ENCODE measurements at regions of chr6 and their contacts with region 1.

Region 1: DNA sequence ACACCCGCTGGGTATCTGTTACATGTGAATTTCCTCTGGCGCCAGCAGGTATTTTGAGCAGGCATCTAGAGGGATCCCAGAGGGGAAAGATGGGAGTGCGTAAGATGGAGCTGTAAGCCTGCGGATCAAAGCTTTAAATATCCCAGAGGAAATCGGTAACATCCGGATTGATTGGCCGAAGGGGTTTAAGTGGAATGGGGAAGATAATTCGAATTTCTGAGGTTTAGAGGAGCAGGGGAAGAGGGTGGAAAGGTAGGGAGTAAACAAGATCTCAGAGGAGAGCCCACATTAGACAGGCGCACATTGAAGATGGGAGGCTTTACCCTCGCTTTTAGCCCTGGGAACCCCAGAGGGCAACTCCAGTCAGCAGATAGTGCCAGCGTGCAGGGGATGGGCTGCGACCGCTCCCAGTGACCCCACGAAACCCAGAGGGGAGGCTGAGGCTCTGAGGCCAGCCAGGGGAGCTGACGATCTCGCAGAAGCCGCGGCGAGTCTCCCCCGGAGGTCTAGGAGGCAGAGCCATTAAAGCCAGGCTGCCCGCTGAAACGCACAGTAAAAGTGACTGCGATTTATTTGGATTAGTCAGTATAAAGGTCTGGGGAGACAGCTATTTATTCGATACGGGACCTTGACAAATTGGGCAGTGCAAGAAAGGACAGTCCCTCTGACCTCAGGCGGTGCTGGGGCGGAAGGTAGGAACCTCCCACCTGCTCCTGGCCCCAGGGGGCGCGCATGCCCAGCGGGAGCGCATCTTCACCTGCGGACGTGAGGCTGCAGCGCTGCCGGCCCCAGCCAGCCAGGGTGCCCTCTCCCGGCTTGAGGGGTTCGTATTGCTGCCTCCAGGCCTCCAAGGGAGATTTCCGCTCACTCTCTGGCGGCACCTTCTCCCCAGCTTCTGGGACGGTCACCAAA is 34.3 kb upstream of the TCF21 start:
- DNase-seq: no peak
- H3K4me3 Mint-ChIP-seq: no peak overlapping the region
- H3K27ac Mint-ChIP-seq: no peak overlapping the region
- H3K4me1 Mint-ChIP-seq: peaks cover 3% of the 10 kb centered on the region
- H3K27me3 Mint-ChIP-seq: peaks cover 57% of the 10 kb centered on the region

Region 2: GRCh38 chr6:133707456-133707855 is 147.2 kb before region 1 on chr6:
- CTCF ChIA-PET with region 1: no interaction called
- POLR2A ChIA-PET with region 1: no interaction called
- DNase-seq: peak; percentile 34
- H3K4me3 Mint-ChIP-seq: no peak overlapping the region
- H3K27ac Mint-ChIP-seq: no peak overlapping the region
- H3K4me1 Mint-ChIP-seq: peaks cover 6% of the 10 kb centered on the region
- H3K27me3 Mint-ChIP-seq: no peaks in the 10 kb centered on the region

Region 3: DNA sequence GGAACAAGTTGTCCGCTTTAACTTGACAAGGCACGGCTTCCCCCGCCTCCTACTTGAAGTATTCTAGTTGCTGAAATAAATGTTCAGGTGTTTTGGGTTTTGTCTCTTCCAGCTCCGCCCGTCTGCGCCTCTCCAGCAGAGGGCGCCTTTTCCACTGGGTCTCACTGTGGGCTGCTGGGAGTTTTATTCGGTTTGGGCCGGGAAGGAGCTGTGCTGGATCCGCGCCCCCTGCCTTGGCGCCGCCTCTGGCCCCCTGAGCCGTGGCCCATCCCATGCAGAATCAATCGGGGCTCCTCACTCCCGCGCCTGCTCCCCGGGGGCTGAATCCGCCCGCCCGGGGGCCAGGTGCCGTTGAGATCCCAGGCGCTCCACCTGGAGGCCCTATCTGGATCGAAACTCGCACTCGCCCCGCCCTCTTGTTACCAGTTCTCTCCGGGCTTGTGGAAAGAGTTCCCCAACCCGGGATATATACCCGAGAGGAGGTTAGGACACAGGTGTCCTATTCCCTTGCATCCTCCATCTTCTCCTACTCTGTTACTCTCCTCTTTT is 16.7 kb before region 1 on chr6:
- CTCF ChIA-PET with region 1: interaction called, 11 read pairs
- POLR2A ChIA-PET with region 1: no interaction called
- DNase-seq: peak; percentile 61
- H3K4me3 Mint-ChIP-seq: peak overlapping the region; percentile 56
- H3K27ac Mint-ChIP-seq: no peak overlapping the region
- H3K4me1 Mint-ChIP-seq: peaks cover 6% of the 10 kb centered on the region
- H3K27me3 Mint-ChIP-seq: peaks cover 13% of the 10 kb centered on the region